ENCODE measurements at regions of chr1 and their contacts with region 1.

Region 1: DNA sequence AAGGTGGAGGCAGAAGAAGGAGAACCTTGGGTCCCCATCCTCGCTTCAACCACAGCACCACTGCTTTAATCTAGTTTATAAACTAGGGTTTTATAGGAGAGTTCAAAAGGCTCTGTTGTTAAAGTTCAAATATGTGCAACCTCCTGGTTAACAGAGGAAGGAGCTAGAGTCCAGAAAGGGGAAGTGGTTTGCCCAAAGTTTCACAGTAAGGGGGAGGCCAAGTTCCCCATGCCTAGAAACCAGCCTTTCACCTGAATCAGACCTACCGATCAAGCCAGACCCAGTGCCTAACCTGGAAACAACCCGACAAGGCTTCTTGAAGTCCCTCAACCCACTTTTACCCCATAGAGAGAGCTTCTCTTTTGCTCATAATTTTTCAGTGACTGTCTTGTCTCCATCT is 106.5 kb downstream of the PLPP3 start:
- DNase-seq: no peak
- ATAC-seq: no peak

Region 2: GRCh38 chr1:56301847-56302246 is 171.0 kb before region 1 on chr1:
- intact Hi-C with region 1: no loop called
- DNase-seq: no peak
- ATAC-seq: peak in 1 of 2 donors; percentile 52

Region 3: DNA sequence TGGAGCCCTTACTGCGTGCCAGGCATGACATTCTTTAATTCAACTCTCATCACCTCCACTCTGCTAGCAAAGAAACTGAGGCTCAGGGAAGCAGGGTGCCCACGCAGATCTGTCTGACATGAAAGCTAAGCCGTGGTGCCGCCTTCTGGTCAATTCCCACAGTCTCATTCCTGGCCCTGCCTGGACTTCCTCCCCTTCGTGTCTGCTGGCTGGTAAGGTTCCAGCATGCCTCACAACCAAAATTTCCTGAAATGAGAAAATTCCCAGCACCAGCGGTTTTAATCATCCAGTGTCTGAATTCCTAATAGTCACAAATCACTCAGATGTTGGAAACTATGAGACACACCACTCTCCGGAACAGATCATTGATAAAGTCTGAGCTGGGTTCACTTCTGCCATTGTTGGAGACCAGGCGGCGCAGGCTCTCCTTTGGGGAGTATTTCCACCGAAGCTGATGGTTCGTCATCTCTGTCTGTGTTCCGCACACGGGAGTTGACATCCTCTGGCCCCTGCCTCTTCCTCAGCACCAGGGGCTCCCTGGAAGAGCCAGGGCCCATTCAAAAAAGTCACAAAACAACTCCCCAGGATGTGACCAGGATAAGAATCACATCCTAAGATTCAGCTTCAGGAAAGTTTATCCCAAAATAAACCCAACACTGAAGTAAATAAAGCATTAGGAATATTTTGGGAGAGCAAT is 61.2 kb before region 1 on chr1:
- intact Hi-C with region 1: loop called in 1 of 2 experiments (anchors 5 kb)
- DNase-seq: peak; percentile 85
- ATAC-seq: peak; percentile 74 to 75

Region 4: DNA sequence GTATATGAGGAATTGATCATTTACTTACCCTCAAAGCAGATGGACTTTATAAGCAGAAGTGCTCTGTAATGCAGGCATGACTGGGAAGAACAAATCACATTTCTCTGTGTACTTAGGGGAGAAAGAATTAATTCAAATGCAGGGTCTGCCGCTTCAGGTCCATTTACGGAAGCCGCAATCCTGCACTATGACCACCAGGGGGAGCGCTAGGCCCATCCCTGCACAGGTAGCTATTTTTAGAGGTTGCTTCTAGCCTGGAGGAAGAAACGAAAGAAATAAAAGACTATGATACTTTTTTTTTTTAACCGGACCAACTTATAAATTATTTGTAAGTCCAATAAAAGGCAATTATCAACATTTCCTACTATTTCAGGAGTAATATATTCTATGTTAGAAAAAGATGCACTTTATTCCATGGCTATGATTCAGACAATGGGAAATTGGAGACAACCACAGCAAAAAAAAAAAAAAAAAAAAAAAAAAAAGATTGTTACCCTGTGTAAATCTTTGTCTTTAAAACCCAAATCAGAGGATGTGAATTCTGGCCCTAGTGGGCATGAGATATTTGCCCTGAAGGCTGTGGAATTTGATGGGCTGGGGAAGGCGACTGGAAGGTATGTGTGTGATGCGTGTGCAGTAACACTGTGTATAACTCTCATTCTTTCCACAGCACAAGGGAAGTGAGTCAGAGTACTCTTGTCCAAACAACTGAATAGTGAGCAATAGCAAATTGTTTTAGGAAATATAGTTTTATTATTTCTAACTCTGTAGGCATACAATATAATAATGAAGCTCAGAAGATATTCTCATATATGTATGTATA is 359.2 kb after region 1 on chr1:
- intact Hi-C with region 1: no loop called
- DNase-seq: peak; percentile 59
- ATAC-seq: peak; percentile 77 to 90

Measured in left cardiac atrium (tissue), 4 donors.